Activated CD4-positive, alpha-beta T cell treated with anti-CD3 and anti-CD28 coated beads for 36 hours (primary cell): ENCODE measurements at regions of chr5 and their contacts with region 1.

Region 1: DNA sequence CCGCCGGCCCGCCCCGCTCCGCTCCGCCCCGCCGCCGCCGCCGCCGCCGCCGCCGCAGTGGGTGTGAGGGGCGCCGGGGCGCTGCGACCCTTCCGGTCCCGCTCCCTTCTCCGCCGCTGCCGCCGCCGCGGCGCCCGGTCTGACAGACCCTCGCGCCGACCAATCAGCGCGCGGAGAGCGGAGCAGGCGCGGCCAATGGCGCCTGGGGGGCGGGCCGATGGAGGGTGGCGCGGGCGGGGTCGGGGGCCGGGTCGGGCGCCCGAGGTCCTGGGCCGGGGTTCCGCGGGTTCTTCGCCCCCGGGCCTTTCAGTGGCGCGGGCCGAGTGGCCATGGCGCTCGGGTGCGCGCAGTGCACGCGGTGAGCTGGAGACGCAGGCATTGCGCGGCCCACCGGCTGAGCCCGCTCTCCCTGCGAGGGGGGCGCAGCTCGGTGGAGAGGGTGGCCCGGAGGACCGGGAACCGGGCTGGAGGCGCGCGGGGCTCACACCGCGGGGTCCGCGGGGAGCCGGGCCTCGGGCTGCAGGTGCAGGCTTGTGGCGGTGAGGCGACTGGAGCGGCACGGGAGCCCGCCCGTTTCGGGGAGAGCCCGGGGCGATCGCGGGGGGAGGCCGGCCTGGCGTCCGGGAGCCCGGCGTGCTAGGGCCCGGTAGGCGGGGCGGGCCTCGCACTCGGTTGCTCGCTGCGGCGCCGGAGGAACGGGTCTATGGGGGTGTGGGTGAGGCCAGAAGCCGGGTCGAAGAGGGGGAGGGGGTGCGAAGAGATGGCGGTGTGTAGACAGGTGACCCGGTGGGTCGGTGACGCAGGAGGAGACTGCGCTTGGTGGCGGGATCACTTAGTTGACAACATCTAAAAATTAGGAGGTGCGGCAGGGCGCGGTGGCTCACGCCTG is at the start of gene MAPK9:
- DNase-seq: peak; percentile 91
- ATAC-seq: peak; percentile 85
- H3K4me3 Mint-ChIP-seq: peak within 1 kb of the TSS; percentile 91
- H3K27ac Mint-ChIP-seq: peak within 1 kb of the TSS; percentile 93
- H3K4me1 Mint-ChIP-seq: peaks cover 37% of the 10 kb centered on the region
- H3K27me3 Mint-ChIP-seq: no peaks in the 10 kb centered on the region
- total RNA-seq, gene MAPK9: 37.0 to 38.1 TPM

Region 2: DNA sequence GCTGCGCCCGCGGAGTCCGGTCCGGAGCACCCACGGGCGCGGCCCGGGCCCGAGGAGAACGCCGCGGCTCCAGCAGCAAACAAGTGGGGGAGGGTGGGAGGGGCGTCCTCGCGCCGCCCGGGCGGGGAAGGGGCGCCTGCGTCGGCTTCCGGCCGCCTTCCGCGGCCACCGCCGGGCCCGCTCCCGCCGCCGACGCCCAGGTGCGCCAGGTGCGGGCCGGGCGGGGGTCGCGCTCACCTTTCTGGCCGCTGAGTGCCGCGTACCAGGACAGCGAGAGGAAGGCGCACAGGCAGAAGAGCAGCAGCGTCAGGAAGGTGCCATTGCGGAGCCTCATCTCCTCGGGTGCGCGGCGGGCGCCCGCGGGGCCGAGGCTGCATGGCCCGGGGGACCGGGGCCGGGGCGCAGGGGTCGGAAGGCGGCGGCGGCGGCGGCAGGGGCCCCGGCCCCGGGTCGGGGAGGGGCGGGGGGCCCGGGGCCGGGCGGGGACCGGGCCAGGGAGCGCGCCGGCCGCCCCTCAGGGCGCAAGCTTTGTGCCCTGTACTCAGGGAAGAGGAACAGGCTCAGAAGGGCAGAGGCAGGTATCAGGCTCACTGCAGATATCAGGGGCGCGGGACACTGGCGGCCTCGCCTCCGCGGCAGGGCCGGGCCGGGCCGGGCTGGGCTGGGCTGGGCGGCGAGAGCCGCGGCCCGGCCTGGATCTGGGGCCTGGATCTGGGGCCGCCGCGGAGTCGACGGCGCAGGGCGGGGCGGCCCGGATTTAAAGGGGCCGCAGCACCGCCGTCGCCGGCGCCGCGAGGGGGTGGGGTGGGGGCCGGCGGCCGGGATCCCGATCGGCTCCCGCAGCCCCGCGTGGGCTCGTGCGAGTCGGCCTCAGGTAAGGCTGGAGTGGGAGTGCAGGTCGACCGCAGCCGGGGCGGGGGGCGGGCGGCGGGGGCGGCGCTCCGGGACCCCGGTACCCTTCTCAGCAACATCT is 485.7 kb before region 1 on chr5 and contains the start of gene MGAT4B:
- CTCF ChIA-PET with region 1: no interaction called
- POLR2A ChIA-PET with region 1: no interaction called
- intact Hi-C with region 1: loop called in 1 of 2 experiments (anchors 5 kb)
- DNase-seq: peak; percentile 82
- ATAC-seq: peak; percentile 65
- H3K4me3 Mint-ChIP-seq: peak within 1 kb of the TSS; percentile 82
- H3K27ac Mint-ChIP-seq: peak within 1 kb of the TSS; percentile 25
- H3K4me1 Mint-ChIP-seq: peaks cover 36% of the 10 kb centered on the region
- H3K27me3 Mint-ChIP-seq: no peaks in the 10 kb centered on the region
- total RNA-seq, gene MGAT4B: 52.4 to 62.8 TPM

Region 3: GRCh38 chr5:180315762-180316212 is 23.6 kb after region 1 on chr5:
- CTCF ChIA-PET with region 1: interaction called, 59 read pairs
- POLR2A ChIA-PET with region 1: no interaction called
- intact Hi-C with region 1: loop called (anchors 1 kb)
- DNase-seq: peak; percentile 84
- ATAC-seq: peak; percentile 66
- H3K4me3 Mint-ChIP-seq: no peak overlapping the region
- H3K27ac Mint-ChIP-seq: no peak overlapping the region
- H3K4me1 Mint-ChIP-seq: no peaks in the 10 kb centered on the region
- H3K27me3 Mint-ChIP-seq: peaks cover 4% of the 10 kb centered on the region

Region 4: GRCh38 chr5:180340856-180341255 is 48.7 kb after region 1 on chr5:
- CTCF ChIA-PET with region 1: no interaction called
- POLR2A ChIA-PET with region 1: no interaction called
- intact Hi-C with region 1: no loop called
- DNase-seq: no peak
- ATAC-seq: no peak
- H3K4me3 Mint-ChIP-seq: no peak overlapping the region
- H3K27ac Mint-ChIP-seq: no peak overlapping the region
- H3K4me1 Mint-ChIP-seq: no peaks in the 10 kb centered on the region
- H3K27me3 Mint-ChIP-seq: peaks cover 9% of the 10 kb centered on the region

Region 5: DNA sequence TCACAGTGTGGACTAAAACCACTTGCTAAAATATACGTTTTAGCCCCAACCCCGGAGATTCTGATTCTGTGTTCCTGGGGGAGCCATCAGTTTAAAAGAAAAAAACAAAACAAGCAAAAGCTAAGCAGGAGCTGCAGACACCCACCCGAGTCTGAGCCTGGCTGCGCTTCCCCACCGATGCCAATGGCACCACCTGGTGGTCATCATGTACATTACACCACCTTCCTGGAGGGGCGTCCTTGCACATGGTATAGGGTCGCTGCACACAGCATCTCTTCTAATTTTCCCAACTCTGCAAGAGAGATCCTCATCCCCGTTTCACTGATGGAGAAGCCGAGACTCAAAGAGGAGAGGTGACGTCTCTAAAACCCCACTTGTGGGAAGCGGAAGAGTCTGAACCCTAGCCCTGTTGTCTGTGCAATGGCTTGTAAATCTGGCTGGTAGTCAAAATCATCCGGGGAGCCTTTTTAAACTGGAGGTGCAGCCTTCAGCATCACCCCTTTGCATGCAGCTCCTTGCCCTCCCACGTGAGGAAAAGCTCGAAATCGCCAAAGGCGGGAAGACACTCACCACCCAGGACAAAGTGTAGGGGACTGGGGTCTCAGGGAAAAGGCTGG is 178.9 kb after region 1 on chr5:
- CTCF ChIA-PET with region 1: no interaction called
- POLR2A ChIA-PET with region 1: no interaction called
- intact Hi-C with region 1: loop called (anchors 1 to 2 kb)
- DNase-seq: peak; percentile 70
- ATAC-seq: peak; percentile 82
- H3K4me3 Mint-ChIP-seq: no peak overlapping the region
- H3K27ac Mint-ChIP-seq: no peak overlapping the region
- H3K4me1 Mint-ChIP-seq: no peaks in the 10 kb centered on the region
- H3K27me3 Mint-ChIP-seq: peaks cover 4% of the 10 kb centered on the region

Region 6: DNA sequence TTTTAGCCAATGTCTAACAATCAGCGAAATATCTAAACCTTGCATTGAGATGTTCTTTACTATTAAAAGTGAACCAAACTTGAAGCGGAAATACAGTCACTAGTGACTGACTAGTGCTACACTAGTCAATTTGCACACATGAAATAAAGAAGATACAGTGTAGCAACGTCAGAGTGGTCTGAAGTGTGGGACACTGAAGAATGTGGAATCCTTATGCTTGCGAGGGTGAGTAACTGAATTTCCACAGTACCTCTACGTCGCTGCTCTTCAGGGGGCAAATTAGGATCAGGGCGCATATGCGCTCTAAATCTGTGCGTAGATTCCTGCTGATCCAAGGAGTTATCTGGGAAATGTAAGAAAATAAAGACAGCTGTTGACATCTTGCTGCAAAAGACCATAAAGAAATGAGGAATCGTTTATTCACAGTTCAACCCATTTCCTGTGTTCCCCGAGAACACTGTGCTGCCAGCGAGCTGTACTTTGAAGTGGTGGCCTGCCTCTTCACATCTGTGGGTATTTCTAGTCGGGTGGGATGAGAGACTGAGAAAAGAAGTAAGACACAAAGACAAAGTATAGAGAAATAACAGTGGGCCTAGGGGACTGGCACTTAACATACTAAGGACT is 397.0 kb after region 1 on chr5:
- CTCF ChIA-PET with region 1: no interaction called
- POLR2A ChIA-PET with region 1: no interaction called
- intact Hi-C with region 1: loop called in 1 of 2 experiments (anchors 2 kb)
- DNase-seq: peak; percentile 65
- ATAC-seq: peak; percentile 66
- H3K4me3 Mint-ChIP-seq: peak overlapping the region; percentile 61
- H3K27ac Mint-ChIP-seq: peak overlapping the region; percentile 88
- H3K4me1 Mint-ChIP-seq: peaks cover 63% of the 10 kb centered on the region
- H3K27me3 Mint-ChIP-seq: no peaks in the 10 kb centered on the region

Region 7: DNA sequence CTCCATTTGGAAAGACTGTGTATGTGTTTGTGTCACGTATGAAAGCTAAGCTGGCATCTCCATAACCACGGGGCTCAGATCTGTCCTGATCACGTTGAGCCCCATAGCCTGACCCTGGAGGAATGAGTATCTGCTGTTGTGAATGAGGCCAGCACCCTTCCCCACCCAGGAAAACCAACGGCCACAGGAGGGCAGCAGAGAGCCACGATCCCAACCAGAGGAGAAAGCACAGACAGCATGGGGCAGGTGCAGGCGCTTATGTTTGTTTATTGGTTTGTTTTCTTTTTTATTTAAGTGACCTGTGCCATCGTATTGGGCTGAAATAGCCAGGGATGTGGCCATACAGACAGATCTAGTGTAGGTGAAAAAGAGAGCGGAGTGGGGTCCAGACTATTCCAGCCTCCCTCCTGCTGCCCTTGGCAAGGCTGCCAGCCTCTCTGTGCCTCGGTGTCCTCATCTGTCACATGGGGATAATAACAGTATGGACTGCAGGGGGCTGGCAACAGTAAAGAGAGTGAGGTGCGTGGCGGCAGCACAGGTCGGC is 867.2 kb after region 1 on chr5:
- CTCF ChIA-PET with region 1: no interaction called
- POLR2A ChIA-PET with region 1: no interaction called
- intact Hi-C with region 1: loop called in 1 of 2 experiments (anchors 10 kb)
- DNase-seq: peak; percentile 96
- ATAC-seq: peak; percentile 76
- H3K4me3 Mint-ChIP-seq: peak overlapping the region; percentile 18
- H3K27ac Mint-ChIP-seq: peak overlapping the region; percentile 88
- H3K4me1 Mint-ChIP-seq: peaks cover 42% of the 10 kb centered on the region
- H3K27me3 Mint-ChIP-seq: peaks cover 3% of the 10 kb centered on the region